GM12878 (cell line): ENCODE measurements at regions of chr1 and their contacts with region 1.

Region 1: GRCh38 chr1:41751804-41752513 is 166.8 kb downstream of the HIVEP3 start:
- DNase-seq: peak; percentile 86
- ATAC-seq: peak; percentile 83
- H3K4me3 ChIP-seq: peak overlapping the region; percentile 18; the same call in 1 of the 2 replicates
- H3K27ac ChIP-seq: peak overlapping the region; percentile 83
- H3K4me1 ChIP-seq: peaks cover 55% of the 10 kb centered on the region
- H3K27me3 ChIP-seq: no peaks in the 10 kb centered on the region
- CTCF ChIP-seq: no peak
- EP300 ChIP-seq: peak; percentile 77 to 80; a peak in 3 of 4 replicates
- POLR2A ChIP-seq: 0 out of 2 replicates have a peak, but pooled peaks have one; percentile 17
- RAD21 ChIP-seq: no peak; the same call in 1 of the 2 replicates

Region 2: DNA sequence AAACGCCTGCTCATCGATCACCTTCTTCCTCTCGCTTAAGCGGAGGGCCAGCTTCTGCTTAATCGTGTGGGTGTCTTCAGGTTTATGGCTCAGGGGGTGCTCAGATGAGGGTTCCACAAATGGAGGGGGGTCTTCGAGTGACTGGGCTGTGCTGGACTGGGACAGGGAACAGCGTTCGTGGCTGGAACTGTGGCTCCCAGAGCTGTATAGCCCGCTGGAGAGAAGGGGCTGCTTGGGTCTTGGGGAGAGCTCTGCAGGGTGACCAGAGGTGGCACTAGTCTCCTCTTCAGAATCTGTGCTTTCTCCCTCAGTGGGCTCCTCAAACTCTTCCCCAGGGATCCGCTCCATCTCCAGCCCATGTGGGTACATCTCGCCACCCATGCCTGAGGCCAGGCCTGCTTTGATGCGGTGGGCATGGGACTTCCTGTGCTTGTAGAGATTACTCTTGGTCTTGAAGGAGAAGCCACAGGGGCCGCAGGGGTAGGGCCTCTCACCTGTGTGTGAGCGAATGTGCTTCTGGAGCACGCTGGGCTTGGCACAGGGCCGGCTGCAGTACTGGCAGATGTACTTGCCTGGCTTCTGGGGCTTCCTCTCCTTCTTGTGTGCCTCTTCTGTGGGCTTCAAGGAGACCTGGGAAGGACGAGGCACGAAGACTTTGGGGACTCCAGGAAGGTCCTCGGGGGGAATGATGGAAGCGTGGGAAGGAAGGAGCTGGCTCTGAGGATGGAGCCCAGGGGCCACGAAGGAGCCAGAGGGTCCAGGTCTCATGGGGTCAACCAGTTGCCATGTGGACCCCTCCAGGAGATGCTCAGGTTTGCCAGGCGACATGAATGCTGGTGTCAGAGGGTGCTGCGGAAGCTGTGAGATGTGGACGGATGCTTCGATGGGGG is 168.1 kb before region 1 on chr1:
- CTCF ChIA-PET with region 1: no interaction called
- POLR2A ChIA-PET with region 1: no interaction called
- RAD21 ChIA-PET with region 1: no interaction called
- SMC1A ChIA-PET with region 1: no interaction called
- in situ Hi-C with region 1: no loop called
- intact Hi-C with region 1: no loop called
- DNase-seq: no peak
- ATAC-seq: no peak
- H3K4me3 ChIP-seq: no peak overlapping the region
- H3K27ac ChIP-seq: no peak overlapping the region
- H3K4me1 ChIP-seq: no peaks in the 10 kb centered on the region
- H3K27me3 ChIP-seq: no peaks in the 10 kb centered on the region
- CTCF ChIP-seq: no peak
- EP300 ChIP-seq: no peak
- POLR2A ChIP-seq: no peak
- RAD21 ChIP-seq: no peak

Region 3: DNA sequence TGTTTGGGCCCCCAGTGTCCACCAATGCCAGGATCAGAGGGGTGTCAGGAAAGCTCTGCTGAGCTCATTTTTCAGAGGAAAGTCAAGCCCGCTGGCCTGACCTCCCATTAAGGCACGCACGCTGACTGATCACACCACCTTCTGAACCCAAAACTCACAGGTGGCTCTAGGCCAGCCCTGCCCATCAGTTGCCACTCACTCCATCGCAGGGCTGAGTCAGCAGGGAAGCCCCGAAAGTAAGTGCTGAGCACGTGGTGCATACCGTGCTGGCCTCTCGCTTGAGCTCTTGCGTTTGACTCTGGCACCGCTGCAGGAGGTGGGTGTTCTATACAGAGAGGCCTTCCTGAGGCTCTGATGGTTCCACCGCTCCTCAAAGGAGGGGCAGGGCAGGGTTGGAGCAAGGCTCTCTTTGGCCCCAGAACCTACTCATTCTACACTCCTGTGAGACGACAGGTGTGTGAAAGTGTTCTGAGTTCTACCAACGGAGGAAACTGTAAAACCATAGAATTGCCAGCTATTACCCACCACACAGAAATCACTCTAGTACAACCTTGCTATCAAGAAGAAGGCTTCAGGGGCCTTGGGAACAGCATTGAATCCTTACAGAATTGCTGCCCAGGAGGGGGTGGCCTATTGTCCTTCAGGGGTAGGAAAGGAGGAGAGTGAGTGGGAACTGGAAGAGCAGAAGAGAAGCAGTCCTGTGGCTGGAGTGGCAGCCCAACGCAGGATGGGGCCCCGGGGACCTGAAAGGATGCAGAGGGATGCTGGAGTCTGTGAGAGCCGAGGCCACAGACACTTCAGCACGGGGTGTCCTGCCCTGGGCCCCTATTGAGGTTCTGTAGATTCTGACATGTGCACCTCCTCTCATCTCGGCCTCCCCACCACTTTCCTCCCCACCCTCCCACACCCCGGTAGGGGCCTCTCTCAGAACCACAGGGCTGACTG is 52.8 kb before region 1 on chr1:
- CTCF ChIA-PET with region 1: no interaction called
- POLR2A ChIA-PET with region 1: no interaction called
- RAD21 ChIA-PET with region 1: interaction called, 11 read pairs
- SMC1A ChIA-PET with region 1: interaction called, 11 read pairs
- in situ Hi-C with region 1: no loop called
- intact Hi-C with region 1: no loop called
- DNase-seq: peak; percentile 86
- ATAC-seq: peak; percentile 96
- H3K4me3 ChIP-seq: no peak overlapping the region
- H3K27ac ChIP-seq: peak overlapping the region; percentile 9; the same call in 1 of the 2 replicates
- H3K4me1 ChIP-seq: peaks cover 35% of the 10 kb centered on the region
- H3K27me3 ChIP-seq: no peaks in the 10 kb centered on the region
- CTCF ChIP-seq: no peak
- EP300 ChIP-seq: peak in 1 of 2 experiments; percentile 47; a peak in 1 of 4 replicates
- POLR2A ChIP-seq: no peak; the same call in 1 of the 2 replicates
- RAD21 ChIP-seq: peak; percentile 37

Region 4: GRCh38 chr1:41739061-41739955 is 12.7 kb before region 1 on chr1:
- CTCF ChIA-PET with region 1: interaction called, 29 read pairs
- POLR2A ChIA-PET with region 1: interaction called, 9 read pairs
- RAD21 ChIA-PET with region 1: interaction called, 70 read pairs
- SMC1A ChIA-PET with region 1: interaction called, 12 read pairs
- in situ Hi-C with region 1: no loop called
- intact Hi-C with region 1: no loop called
- DNase-seq: peak; percentile 66
- ATAC-seq: peak; percentile 87
- H3K4me3 ChIP-seq: peak overlapping the region; percentile 41; the same call in 1 of the 2 replicates
- H3K27ac ChIP-seq: peak overlapping the region; percentile 94
- H3K4me1 ChIP-seq: peaks cover 54% of the 10 kb centered on the region
- H3K27me3 ChIP-seq: no peaks in the 10 kb centered on the region
- CTCF ChIP-seq: no peak
- EP300 ChIP-seq: peak; percentile 53 to 70; a peak in 1 of 4 replicates
- POLR2A ChIP-seq: peak; percentile 57
- RAD21 ChIP-seq: no peak

Region 5: GRCh38 chr1:41789419-41790260 is 37.7 kb after region 1 on chr1:
- CTCF ChIA-PET with region 1: interaction called, 10 read pairs
- POLR2A ChIA-PET with region 1: no interaction called
- RAD21 ChIA-PET with region 1: interaction called, 3 read pairs
- SMC1A ChIA-PET with region 1: interaction called, 4 read pairs
- in situ Hi-C with region 1: no loop called
- intact Hi-C with region 1: no loop called
- DNase-seq: no peak
- ATAC-seq: no peak
- H3K4me3 ChIP-seq: no peak overlapping the region
- H3K27ac ChIP-seq: no peak overlapping the region
- H3K4me1 ChIP-seq: peaks cover 15% of the 10 kb centered on the region
- H3K27me3 ChIP-seq: no peaks in the 10 kb centered on the region
- CTCF ChIP-seq: no peak
- EP300 ChIP-seq: no peak
- POLR2A ChIP-seq: no peak
- RAD21 ChIP-seq: no peak

Region 6: GRCh38 chr1:41812051-41812450 is 60.1 kb after region 1 on chr1:
- CTCF ChIA-PET with region 1: interaction called, 8 read pairs
- POLR2A ChIA-PET with region 1: interaction called, 33 read pairs
- RAD21 ChIA-PET with region 1: interaction called, 23 read pairs
- SMC1A ChIA-PET with region 1: interaction called, 34 read pairs
- in situ Hi-C with region 1: no loop called
- intact Hi-C with region 1: loop called (anchors 2 kb)
- DNase-seq: no peak
- ATAC-seq: peak; percentile 70
- H3K4me3 ChIP-seq: no peak overlapping the region
- H3K27ac ChIP-seq: no peak overlapping the region
- H3K4me1 ChIP-seq: peaks cover 43% of the 10 kb centered on the region
- H3K27me3 ChIP-seq: no peaks in the 10 kb centered on the region
- CTCF ChIP-seq: peak; percentile 67 to 72 (median 70)
- EP300 ChIP-seq: no peak
- POLR2A ChIP-seq: no peak
- RAD21 ChIP-seq: peak; percentile 77

Region 7: DNA sequence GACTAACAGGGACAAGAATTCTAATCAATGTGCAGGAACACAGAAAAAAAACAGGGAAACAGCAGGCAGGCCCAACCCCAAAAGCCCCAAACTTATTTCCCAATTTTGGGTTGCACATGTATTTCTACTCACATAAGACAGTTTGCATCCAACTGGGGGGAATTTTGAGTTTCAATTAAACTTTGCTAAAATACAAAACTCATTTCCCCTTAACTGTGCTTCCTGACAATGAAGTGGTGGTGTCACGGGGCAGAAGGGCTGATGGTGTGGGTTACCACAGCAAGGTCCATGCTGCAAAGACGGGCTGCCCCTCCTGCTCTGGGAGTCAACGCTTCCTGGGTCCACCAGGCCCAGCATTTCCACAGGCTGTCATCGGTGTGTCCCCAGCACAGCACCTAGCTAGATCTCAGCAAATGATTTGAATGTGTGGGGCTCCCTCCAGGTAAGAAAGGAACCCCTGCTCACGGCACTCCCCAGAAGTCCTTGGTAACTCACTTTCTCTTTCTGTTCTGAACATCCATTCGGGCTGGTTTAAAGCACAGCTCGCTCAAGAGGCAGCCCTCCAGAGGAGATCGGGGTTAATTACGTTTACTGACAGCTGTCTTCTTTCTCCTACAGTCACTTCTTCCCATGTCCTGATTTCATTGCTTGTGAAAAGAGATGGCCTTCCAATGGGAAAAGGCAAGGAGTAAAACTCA is 139.4 kb after region 1 on chr1:
- CTCF ChIA-PET with region 1: interaction called, 3 read pairs
- POLR2A ChIA-PET with region 1: no interaction called
- RAD21 ChIA-PET with region 1: interaction called, 3 read pairs
- SMC1A ChIA-PET with region 1: interaction called, 4 read pairs
- in situ Hi-C with region 1: no loop called
- intact Hi-C with region 1: loop called (anchors 5 kb)
- DNase-seq: peak; percentile 68
- ATAC-seq: peak; percentile 98
- H3K4me3 ChIP-seq: peak overlapping the region; percentile 66
- H3K27ac ChIP-seq: peak overlapping the region; percentile 75
- H3K4me1 ChIP-seq: peaks cover 15% of the 10 kb centered on the region
- H3K27me3 ChIP-seq: no peaks in the 10 kb centered on the region
- CTCF ChIP-seq: peak; percentile 39 to 42 (median 41); a peak in 5 of 6 replicates
- EP300 ChIP-seq: peak; percentile 4 to 26; a peak in 1 of 4 replicates
- POLR2A ChIP-seq: peak; percentile 73
- RAD21 ChIP-seq: peak; percentile 72

Region 8: GRCh38 chr1:42035830-42036604 is 284.1 kb after region 1 on chr1:
- CTCF ChIA-PET with region 1: no interaction called
- POLR2A ChIA-PET with region 1: no interaction called
- RAD21 ChIA-PET with region 1: no interaction called
- SMC1A ChIA-PET with region 1: no interaction called
- in situ Hi-C with region 1: no loop called
- intact Hi-C with region 1: loop called (anchors 10 kb)
- DNase-seq: peak; percentile 55
- ATAC-seq: peak; percentile 90
- H3K4me3 ChIP-seq: peak overlapping the region; percentile 93
- H3K27ac ChIP-seq: peak overlapping the region; percentile 37; the same call in 1 of the 2 replicates
- H3K4me1 ChIP-seq: peaks cover 8% of the 10 kb centered on the region; the same call in 1 of the 2 replicates
- H3K27me3 ChIP-seq: no peaks in the 10 kb centered on the region; a peak in 1 of 4 replicates
- CTCF ChIP-seq: no peak
- EP300 ChIP-seq: no peak
- POLR2A ChIP-seq: peak; percentile 63; the same call in 1 of the 2 replicates
- RAD21 ChIP-seq: no peak